Panc1 (cell line): ENCODE measurements at regions of chr7 and their contacts with region 1.

Region 1: DNA sequence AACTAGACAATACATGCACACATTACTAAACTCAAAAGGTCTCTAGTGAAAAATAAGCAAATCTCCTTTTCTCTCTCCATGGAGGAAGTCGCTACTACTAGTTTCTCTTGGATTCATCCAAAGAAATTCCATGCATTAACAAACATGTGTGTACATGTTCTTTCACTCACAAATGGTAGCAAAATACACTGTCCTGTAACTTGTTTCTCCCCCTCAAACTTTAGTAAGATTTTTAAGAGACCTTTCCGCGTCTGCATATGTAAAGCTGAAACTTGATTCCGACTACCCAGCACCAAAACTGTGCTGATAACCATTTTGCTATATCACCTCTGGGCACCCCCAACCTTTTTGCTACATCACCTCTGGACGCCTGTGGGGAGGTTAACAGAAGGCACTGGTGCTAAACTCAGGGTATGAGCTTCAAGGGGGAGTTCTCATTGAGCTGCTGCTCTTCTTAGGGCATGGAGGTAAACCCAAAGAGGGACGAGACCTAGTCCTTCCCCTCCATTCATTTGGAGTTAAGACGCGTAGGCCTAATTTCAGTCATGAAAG is 67.7 kb upstream of the NFE2L3 start:
- DNase-seq: no peak
- ATAC-seq: no peak
- H3K4me3 ChIP-seq: no peak overlapping the region
- H3K27ac ChIP-seq: no peak overlapping the region
- H3K4me1 ChIP-seq: no peaks in the 10 kb centered on the region
- H3K27me3 ChIP-seq: peaks cover 12% of the 10 kb centered on the region
- CTCF ChIP-seq: no peak

Region 2: DNA sequence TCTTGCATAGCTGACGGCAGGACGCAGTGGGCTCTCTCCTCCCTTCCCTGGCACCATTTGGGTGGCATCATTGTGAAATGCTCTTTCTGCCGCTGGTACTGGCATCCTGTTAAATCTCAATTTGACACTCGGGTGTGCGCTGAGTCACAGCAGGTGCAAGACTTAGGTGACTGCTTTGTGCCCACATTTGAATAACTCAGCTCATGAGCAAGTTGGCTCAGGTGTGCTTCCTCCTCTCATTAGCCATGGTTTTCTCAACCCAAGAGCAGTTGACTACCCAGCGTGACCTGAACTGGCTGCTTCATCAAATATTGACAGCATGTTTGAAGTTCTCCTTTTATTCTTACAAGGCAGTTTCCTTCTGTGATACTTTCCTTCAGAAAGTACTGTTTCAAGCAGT is 43.1 kb after region 1 on chr7:
- CTCF ChIA-PET with region 1: no interaction called
- POLR2A ChIA-PET with region 1: no interaction called
- in situ Hi-C with region 1: no loop called
- intact Hi-C with region 1: no loop called
- DNase-seq: no peak
- ATAC-seq: no peak
- H3K4me3 ChIP-seq: no peak overlapping the region
- H3K27ac ChIP-seq: no peak overlapping the region
- H3K4me1 ChIP-seq: no peaks in the 10 kb centered on the region
- H3K27me3 ChIP-seq: no peaks in the 10 kb centered on the region
- CTCF ChIP-seq: no peak

Region 3: DNA sequence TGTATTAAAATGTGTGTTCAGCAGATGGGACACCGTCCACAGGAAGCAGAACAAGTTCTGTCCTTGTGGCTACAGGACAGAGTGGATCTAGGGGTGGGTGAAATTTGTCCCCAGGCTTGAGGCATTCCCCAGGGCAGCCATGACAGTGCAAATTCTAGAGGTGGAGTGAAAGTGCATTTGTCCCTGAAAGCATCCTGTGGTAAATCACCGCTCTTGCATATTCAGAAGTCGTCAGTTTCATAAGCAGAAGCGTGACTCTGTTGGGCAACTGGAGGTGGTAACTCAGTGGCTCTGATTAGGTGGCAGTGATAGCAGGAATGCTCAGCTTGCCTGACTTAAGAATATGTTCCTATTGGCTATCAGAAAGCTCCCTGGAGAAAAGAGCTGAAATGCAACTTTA is 303.9 kb after region 1 on chr7:
- CTCF ChIA-PET with region 1: no interaction called
- POLR2A ChIA-PET with region 1: interaction called, 10 read pairs
- in situ Hi-C with region 1: no loop called
- intact Hi-C with region 1: no loop called
- DNase-seq: no peak
- ATAC-seq: no peak
- H3K4me3 ChIP-seq: no peak overlapping the region
- H3K27ac ChIP-seq: no peak overlapping the region
- H3K4me1 ChIP-seq: no peaks in the 10 kb centered on the region
- H3K27me3 ChIP-seq: peaks cover 71% of the 10 kb centered on the region
- CTCF ChIP-seq: no peak